ENCODE measurements at regions of chr6 and their contacts with region 1.

Region 1: GRCh38 chr6:155171109-155171746 is 92.6 kb upstream of the CLDN20 start:
- DNase-seq: peak; percentile 63
- ATAC-seq: peak; percentile 88
- H3K4me3 Mint-ChIP-seq: peak overlapping the region; percentile 63
- H3K27ac Mint-ChIP-seq: peak overlapping the region; percentile 89
- H3K4me1 Mint-ChIP-seq: peaks cover 28% of the 10 kb centered on the region
- H3K27me3 Mint-ChIP-seq: no peaks in the 10 kb centered on the region

Region 2: GRCh38 chr6:155067956-155068615 is 103.1 kb before region 1 on chr6:
- POLR2A ChIA-PET with region 1: no interaction called
- DNase-seq: no peak
- ATAC-seq: no peak
- H3K4me3 Mint-ChIP-seq: no peak overlapping the region
- H3K27ac Mint-ChIP-seq: no peak overlapping the region
- H3K4me1 Mint-ChIP-seq: no peaks in the 10 kb centered on the region
- H3K27me3 Mint-ChIP-seq: peaks cover 23% of the 10 kb centered on the region

Region 3: GRCh38 chr6:155154158-155154830 is 16.9 kb before region 1 on chr6:
- POLR2A ChIA-PET with region 1: interaction called, 36 read pairs
- DNase-seq: peak; percentile 58
- ATAC-seq: peak; percentile 79
- H3K4me3 Mint-ChIP-seq: peak overlapping the region; percentile 78
- H3K27ac Mint-ChIP-seq: peak overlapping the region; percentile 87
- H3K4me1 Mint-ChIP-seq: peaks cover 55% of the 10 kb centered on the region
- H3K27me3 Mint-ChIP-seq: no peaks in the 10 kb centered on the region

Measured in activated naive CD8-positive, alpha-beta T cell treated with anti-CD3 and anti-CD28 coated beads, Interleukin-2, amount 10 ng/mL, durations not matched to agents 7 days and 5 days (primary cell).